Activated CD8-positive, alpha-beta T cell treated with anti-CD3 and anti-CD28 coated beads for 36 hours (primary cell): ENCODE measurements at regions of chr2 and their contacts with region 1.

Region 1: GRCh38 chr2:213934560-213934959 is 476.3 kb upstream of the VWC2L start:
- DNase-seq: peak; percentile 24
- ATAC-seq: peak; percentile 51
- H3K4me3 Mint-ChIP-seq: no peak overlapping the region
- H3K27ac Mint-ChIP-seq: no peak overlapping the region
- H3K4me1 Mint-ChIP-seq: no peaks in the 10 kb centered on the region
- H3K27me3 Mint-ChIP-seq: peaks cover 5% of the 10 kb centered on the region
- CTCF ChIP-seq: peak; percentile 58

Region 2: GRCh38 chr2:213251618-213252017 is 682.9 kb before region 1 on chr2:
- CTCF ChIA-PET with region 1: interaction called, 4 read pairs
- POLR2A ChIA-PET with region 1: no interaction called
- intact Hi-C with region 1: loop called (anchors 10 kb)
- DNase-seq: no peak
- ATAC-seq: peak; percentile 77
- H3K4me3 Mint-ChIP-seq: no peak overlapping the region
- H3K27ac Mint-ChIP-seq: no peak overlapping the region
- H3K4me1 Mint-ChIP-seq: peaks cover 3% of the 10 kb centered on the region
- H3K27me3 Mint-ChIP-seq: no peaks in the 10 kb centered on the region
- CTCF ChIP-seq: peak; percentile 79